PC-9 (cell line): ENCODE measurements at regions of chr3 and their contacts with region 1.

Region 1: GRCh38 chr3:186930641-186931531 is 560 bp downstream of the ST6GAL1 start:
- DNase-seq: peak; percentile 65 to 71
- H3K4me3 ChIP-seq: peak overlapping the region; percentile 97
- H3K27ac ChIP-seq: no peak overlapping the region
- H3K4me1 ChIP-seq: peaks cover 12% of the 10 kb centered on the region
- H3K27me3 ChIP-seq: no peaks in the 10 kb centered on the region
- CTCF ChIP-seq: peak; percentile 29; the same call in 1 of the 2 replicates

Region 2: GRCh38 chr3:186849374-186849975 is 81.4 kb before region 1 on chr3:
- CTCF ChIA-PET with region 1: interaction called, 4 read pairs
- POLR2A ChIA-PET with region 1: no interaction called
- intact Hi-C with region 1: loop called (anchors 1 kb)
- DNase-seq: peak in 1 of 2 experiments; percentile 52
- H3K4me3 ChIP-seq: no peak overlapping the region
- H3K27ac ChIP-seq: no peak overlapping the region
- H3K4me1 ChIP-seq: no peaks in the 10 kb centered on the region
- H3K27me3 ChIP-seq: 0 out of 2 replicates have a peak, but pooled peaks cover 7% of the 10 kb centered on the region
- CTCF ChIP-seq: peak; percentile 81

Region 3: GRCh38 chr3:186990878-186991308 is 60.0 kb after region 1 on chr3:
- CTCF ChIA-PET with region 1: no interaction called
- POLR2A ChIA-PET with region 1: no interaction called
- intact Hi-C with region 1: loop called (anchors 2 kb)
- DNase-seq: peak; percentile 79 to 95
- H3K4me3 ChIP-seq: no peak overlapping the region
- H3K27ac ChIP-seq: peak overlapping the region; percentile 73
- H3K4me1 ChIP-seq: peaks cover 31% of the 10 kb centered on the region
- H3K27me3 ChIP-seq: no peaks in the 10 kb centered on the region
- CTCF ChIP-seq: no peak